Activated CD8-positive, alpha-beta memory T cell treated with anti-CD3 and anti-CD28 coated beads, Interleukin-2, amount 10 ng/mL, durations not matched to agents 7 days and 5 days (primary cell): ENCODE measurements at regions of chr12 and their contacts with region 1.

Region 1: DNA sequence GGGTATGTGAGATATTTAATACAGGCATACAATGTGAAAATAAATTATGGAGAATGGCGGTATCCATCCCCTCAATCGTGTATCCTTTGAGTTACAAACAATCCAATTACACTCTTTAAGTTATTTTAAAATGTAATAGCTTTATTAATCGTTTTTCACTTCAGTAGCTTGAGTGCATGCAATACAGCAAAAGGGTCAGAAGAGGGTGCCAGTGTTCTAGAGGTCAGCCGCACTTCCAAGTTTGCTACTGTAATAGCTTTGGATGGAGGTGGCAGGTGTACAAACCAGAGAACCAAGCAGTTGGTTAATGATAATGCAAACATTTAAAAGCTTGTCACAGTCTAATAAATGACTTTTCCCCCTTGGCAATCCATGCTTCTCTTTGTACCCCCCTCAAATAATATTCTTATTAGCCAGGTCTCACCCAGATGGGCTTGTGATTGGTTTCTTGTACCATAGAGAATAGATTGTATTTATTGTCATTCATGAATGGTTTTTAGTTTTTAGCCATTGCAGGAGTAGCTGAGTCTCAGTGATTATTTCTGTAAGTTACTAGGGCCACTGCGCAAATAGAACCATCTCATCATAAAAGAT is 127.0 kb downstream of the ERC1 start:
- DNase-seq: peak; percentile 80
- ATAC-seq: no peak
- H3K4me3 Mint-ChIP-seq: no peak overlapping the region
- H3K27ac Mint-ChIP-seq: no peak overlapping the region
- H3K4me1 Mint-ChIP-seq: peaks cover 15% of the 10 kb centered on the region
- H3K27me3 Mint-ChIP-seq: no peaks in the 10 kb centered on the region

Region 2: GRCh38 chr12:1093166-1093751 is 24.8 kb before region 1 on chr12:
- CTCF ChIA-PET with region 1: interaction called, 11 read pairs
- DNase-seq: no peak
- ATAC-seq: peak; percentile 67
- H3K4me3 Mint-ChIP-seq: no peak overlapping the region
- H3K27ac Mint-ChIP-seq: no peak overlapping the region
- H3K4me1 Mint-ChIP-seq: peaks cover 9% of the 10 kb centered on the region
- H3K27me3 Mint-ChIP-seq: no peaks in the 10 kb centered on the region

Region 3: DNA sequence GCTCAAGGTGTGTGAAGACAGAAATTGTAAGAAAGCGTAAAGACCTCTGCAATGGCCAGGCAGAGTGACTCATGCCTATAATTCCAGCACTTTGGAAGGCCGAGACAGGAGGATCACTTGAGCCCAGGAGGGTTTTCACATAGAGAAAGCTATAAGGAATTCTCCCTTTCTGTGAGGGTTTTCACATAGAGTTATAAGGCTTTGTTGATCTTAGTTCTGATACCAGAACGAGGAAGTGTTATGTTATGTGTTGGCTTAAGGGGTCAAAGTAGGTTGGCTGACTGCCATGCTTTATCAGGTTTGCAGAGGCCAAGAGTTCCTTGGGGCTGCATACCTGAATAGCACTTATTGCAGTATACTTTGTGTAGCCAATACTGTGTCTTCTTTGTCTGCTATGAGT is 12.1 kb after region 1 on chr12:
- CTCF ChIA-PET with region 1: interaction called, 12 read pairs
- DNase-seq: no peak
- ATAC-seq: no peak
- H3K4me3 Mint-ChIP-seq: no peak overlapping the region
- H3K27ac Mint-ChIP-seq: no peak overlapping the region
- H3K4me1 Mint-ChIP-seq: peaks cover 16% of the 10 kb centered on the region
- H3K27me3 Mint-ChIP-seq: no peaks in the 10 kb centered on the region

Region 4: DNA sequence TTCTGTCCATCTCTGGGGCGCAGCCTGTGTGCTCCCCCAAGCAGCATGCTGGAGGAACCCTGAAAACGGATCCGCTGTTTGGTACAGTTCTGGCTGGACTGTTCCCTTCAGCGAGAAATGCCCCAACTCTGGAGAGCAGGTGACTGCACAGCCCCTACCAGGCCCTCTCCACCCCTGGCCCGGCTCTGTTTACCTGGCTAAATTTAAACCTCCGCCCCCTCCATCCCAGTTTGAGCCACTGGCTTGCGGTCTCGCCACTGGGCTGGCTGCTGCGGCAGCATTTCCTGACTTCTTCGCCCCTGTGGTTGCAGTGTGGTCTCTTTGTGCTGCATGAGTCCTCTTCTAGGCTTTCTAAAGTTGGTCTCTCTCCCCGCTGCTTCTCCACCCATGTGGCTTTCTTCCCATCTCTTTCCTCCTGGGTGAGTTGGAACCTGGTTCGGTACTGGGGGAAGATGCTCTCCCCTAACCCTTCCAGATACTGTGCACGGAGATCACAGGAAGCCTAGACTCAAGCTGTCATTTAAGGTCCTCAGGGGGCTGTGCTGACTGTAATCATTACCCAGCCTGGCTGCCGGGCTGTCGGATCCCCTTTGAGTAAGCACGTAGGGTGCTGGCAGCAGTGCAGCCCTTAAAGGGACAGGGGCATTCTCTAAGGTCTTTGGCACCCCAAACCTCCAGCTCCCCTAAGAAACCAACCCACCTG is 415.7 kb after region 1 on chr12:
- CTCF ChIA-PET with region 1: interaction called, 23 read pairs
- DNase-seq: peak; percentile 86
- ATAC-seq: peak; percentile 81
- H3K4me3 Mint-ChIP-seq: peak overlapping the region; percentile 75
- H3K27ac Mint-ChIP-seq: peak overlapping the region; percentile 83
- H3K4me1 Mint-ChIP-seq: peaks cover 40% of the 10 kb centered on the region
- H3K27me3 Mint-ChIP-seq: peaks cover 71% of the 10 kb centered on the region

Region 5: GRCh38 chr12:1583421-1584078 is 465.5 kb after region 1 on chr12:
- CTCF ChIA-PET with region 1: interaction called, 114 read pairs
- DNase-seq: peak; percentile 76
- ATAC-seq: peak; percentile 76
- H3K4me3 Mint-ChIP-seq: no peak overlapping the region
- H3K27ac Mint-ChIP-seq: no peak overlapping the region
- H3K4me1 Mint-ChIP-seq: peaks cover 15% of the 10 kb centered on the region
- H3K27me3 Mint-ChIP-seq: no peaks in the 10 kb centered on the region

Region 6: DNA sequence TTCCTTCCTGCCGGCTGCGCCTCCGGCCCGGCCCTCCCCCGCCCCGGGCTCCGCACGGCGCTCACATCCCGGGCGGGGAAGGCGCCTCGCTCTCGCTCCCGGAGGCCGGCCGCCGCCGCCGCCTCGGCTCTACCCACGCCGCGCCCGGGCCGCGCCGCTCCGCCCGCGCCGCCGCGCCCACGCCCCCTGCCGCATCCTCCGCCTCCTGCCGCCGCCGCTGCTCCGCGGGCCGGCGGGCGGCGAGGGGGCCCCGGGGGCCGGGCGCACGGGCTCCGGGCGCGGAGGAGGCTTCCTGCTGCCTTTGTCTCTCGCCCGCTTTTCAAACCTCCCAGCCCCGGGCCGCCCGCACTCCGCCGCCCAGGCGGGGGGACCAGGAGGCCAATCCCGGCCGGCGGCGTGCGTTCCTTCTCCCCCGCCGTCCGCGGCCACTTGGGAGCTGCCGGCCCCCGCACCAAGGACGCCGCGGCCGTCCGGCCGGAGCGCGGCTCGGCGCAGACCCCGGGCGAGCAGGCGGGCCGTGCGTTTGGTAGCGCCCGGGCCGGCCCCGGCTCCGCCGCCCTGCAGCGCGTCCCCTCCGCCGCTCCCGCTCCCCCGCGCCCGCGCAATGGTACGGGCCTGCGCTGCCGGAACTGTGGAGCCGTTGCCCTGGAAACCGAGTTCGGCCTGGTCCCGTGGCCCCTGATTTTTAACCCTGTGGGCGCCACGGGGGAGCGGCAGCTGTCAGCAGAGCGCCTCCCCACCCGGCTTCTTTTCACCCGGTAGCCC is 476.4 kb after region 1 on chr12 and contains the start of gene FBXL14:
- CTCF ChIA-PET with region 1: interaction called, 38 read pairs
- DNase-seq: peak; percentile 93
- ATAC-seq: peak; percentile 69
- H3K4me3 Mint-ChIP-seq: peak within 1 kb of the TSS; percentile 87
- H3K27ac Mint-ChIP-seq: peak within 1 kb of the TSS; percentile 92
- H3K4me1 Mint-ChIP-seq: peaks cover 38% of the 10 kb centered on the region
- H3K27me3 Mint-ChIP-seq: no peaks in the 10 kb centered on the region
- total RNA-seq, gene FBXL14: 28.2 to 33.4 TPM

Region 7: GRCh38 chr12:1605129-1606020 is 487.3 kb after region 1 on chr12:
- CTCF ChIA-PET with region 1: interaction called, 32 read pairs
- DNase-seq: peak; percentile 72
- ATAC-seq: peak; percentile 60
- H3K4me3 Mint-ChIP-seq: peak overlapping the region; percentile 65
- H3K27ac Mint-ChIP-seq: no peak overlapping the region
- H3K4me1 Mint-ChIP-seq: peaks cover 39% of the 10 kb centered on the region
- H3K27me3 Mint-ChIP-seq: peaks cover 4% of the 10 kb centered on the region